Mammary epithelial cell (primary cell): ENCODE measurements at regions of chr10 and their contacts with region 1.

Region 1: GRCh38 chr10:71465551-71466252 is 69.0 kb downstream of the CDH23 start:
- DNase-seq: no peak
- H3K4me3 ChIP-seq: no peak overlapping the region
- H3K27ac ChIP-seq: no peak overlapping the region
- H3K4me1 ChIP-seq: no peaks in the 10 kb centered on the region
- H3K27me3 ChIP-seq: no peaks in the 10 kb centered on the region
- CTCF ChIP-seq: no peak

Region 2: DNA sequence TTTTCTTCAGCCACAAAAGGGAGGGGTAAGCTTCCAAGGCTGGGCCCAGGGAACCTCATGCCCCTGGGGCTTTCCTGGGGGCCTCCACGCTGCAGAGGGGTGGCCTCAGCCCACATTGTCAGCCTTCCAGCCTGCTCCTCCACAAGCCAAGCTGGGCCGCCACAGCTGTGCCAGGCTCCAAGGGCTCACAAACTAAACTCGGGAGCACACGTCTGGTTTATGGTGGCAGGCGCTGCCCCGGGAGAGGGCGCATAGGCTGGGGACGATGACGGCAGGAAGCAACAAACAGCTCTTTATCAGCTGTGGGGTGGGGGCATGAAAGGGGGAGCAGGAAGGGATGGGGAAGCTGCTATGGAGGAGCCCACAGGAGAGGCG is 75.3 kb before region 1 on chr10:
- CTCF ChIA-PET with region 1: no interaction called
- dilution Hi-C with region 1: loop called (anchors 5 kb)
- in situ Hi-C with region 1: no loop called
- intact Hi-C with region 1: no loop called
- DNase-seq: no peak
- H3K4me3 ChIP-seq: no peak overlapping the region
- H3K27ac ChIP-seq: no peak overlapping the region
- H3K4me1 ChIP-seq: no peaks in the 10 kb centered on the region
- H3K27me3 ChIP-seq: no peaks in the 10 kb centered on the region
- CTCF ChIP-seq: no peak

Region 3: DNA sequence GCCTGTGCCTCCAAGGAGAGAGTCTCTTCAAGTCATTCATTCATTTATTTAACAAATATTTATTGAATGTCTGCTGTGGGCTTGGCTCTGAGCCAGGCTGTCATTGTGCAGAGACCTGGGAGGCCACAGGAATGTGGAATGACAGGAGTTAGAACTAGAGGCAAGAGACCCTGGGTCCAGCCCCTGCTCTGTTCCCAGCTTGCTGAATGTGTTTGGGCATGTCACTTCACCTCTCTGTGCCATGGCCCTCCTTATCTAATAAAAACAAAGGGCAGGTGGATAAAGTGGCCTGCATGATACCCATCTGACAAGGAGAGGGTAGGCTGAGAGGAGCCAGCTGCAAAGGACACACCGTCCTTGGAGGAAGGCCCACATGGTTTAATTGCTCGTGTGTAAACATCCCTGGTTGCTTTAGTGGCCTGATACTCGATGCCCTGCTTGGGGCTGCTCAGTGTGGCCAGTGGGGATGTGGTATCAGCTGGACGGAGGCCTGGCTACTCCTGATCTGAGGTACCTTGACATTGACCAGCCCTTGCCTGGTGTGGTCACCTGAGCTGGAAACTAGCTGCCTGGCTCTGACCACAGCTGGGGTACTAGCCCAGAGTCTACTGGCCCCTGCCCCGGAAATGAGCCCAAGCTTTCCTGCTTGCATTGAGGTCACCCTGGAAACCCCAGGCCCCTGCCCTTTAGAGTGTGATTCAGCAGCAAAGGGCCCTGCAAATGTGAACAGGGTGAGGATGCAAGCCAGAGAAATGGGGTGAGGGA is 47.3 kb after region 1 on chr10:
- CTCF ChIA-PET with region 1: no interaction called
- dilution Hi-C with region 1: no loop called
- in situ Hi-C with region 1: no loop called
- intact Hi-C with region 1: no loop called
- DNase-seq: peak; percentile 59
- H3K4me3 ChIP-seq: no peak overlapping the region
- H3K27ac ChIP-seq: no peak overlapping the region
- H3K4me1 ChIP-seq: peaks cover 12% of the 10 kb centered on the region
- H3K27me3 ChIP-seq: no peaks in the 10 kb centered on the region
- CTCF ChIP-seq: no peak